HepG2 (cell line): ENCODE measurements at regions of chr11 and their contacts with region 1.

Region 1: DNA sequence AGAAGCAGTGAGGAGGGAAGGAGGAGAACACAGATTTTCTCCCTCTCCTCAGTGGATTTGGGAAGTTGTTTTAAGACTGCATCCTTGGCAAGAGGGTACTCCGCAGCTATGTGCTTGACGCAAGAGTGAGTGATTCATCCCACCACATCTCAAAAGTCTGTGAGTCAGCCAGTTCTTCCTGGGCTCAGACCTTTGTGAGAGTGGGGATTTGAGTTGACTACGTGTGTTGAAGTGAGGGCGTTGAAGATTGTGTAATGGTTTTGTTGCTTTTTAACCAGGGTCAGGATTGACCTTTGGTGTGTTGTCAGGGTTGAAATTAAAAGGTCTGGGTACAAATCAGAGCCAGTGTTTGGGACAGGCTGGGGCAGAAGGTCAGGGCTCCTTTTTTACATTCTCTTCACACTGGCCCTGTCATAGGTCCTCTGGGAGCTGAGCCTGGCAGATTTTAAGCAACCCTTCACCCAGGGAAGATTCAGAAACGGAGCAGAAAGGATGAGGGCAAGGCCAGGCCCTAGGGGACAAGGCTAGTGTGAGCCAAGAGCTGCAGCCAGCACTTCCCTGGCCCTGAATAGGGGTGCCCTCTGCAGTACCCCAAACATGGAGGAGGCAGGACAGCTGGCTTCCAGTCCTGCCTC is 4.2 kb upstream of the C11orf86 start:
- DNase-seq: peak; percentile 95
- ATAC-seq: peak; percentile 84
- H3K4me3 ChIP-seq: peak overlapping the region in 1 of 3 experiments; percentile 56; a peak in 2 of 6 replicates
- H3K27ac ChIP-seq: peak overlapping the region; percentile 64
- H3K4me1 ChIP-seq: peaks cover 94% of the 10 kb centered on the region
- H3K27me3 ChIP-seq: no peaks in the 10 kb centered on the region
- CTCF ChIP-seq: no peak
- EP300 ChIP-seq: peak; percentile 72 to 89; a peak in 3 of 4 replicates
- POLR2A ChIP-seq: peak; percentile 36 to 48; a peak in 1 of 4 replicates
- RAD21 ChIP-seq: no peak

Region 2: GRCh38 chr11:66891851-66892660 is 78.9 kb before region 1 on chr11:
- CTCF ChIA-PET with region 1: no interaction called
- POLR2A ChIA-PET with region 1: no interaction called
- in situ Hi-C with region 1: no loop called
- intact Hi-C with region 1: no loop called
- DNase-seq: peak; percentile 88
- ATAC-seq: peak; percentile 89
- H3K4me3 ChIP-seq: no peak overlapping the region
- H3K27ac ChIP-seq: peak overlapping the region; percentile 22
- H3K4me1 ChIP-seq: peaks cover 37% of the 10 kb centered on the region
- H3K27me3 ChIP-seq: no peaks in the 10 kb centered on the region
- CTCF ChIP-seq: peak; percentile 52
- EP300 ChIP-seq: peak in 1 of 2 experiments; percentile 63; a peak in 1 of 4 replicates
- POLR2A ChIP-seq: no peak
- RAD21 ChIP-seq: no peak

Region 3: DNA sequence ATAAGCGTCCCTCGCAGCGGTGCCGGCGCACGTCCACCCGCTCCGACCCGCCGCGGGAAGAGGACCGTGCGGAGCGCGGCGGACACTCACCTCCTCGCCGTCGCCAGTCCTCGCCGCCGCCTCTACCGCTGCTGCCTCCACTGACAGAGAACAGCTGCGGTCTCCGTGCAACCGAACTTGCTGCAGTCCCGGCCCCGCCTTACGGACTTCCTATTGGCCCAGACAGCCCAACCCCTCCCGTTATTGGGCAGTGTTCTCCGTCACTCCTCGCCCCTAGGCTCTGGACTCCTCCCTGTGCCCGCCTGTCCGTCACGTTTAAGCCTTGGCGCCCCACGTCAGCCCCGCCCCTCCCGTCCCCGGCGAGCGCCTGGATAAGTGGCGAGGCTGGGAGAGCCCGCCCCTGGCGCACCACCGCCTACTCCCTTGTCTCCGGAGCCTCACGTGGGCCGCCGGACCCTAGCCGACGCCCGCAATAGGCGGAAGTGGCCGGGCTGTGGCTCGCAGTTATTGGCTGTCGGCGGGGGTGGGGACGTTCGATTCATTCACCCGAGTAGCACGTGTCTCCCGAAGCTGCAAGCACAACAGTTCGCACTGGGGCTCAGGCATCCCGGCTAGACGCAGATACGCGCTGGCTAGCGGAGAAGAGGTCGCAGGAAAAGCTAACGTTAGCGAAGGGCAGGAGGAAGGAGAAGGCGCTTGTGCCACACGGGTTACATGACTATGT is 12.5 kb before region 1 on chr11 and contains the start of gene PC:
- CTCF ChIA-PET with region 1: no interaction called
- POLR2A ChIA-PET with region 1: interaction called, 30 read pairs
- in situ Hi-C with region 1: no loop called
- intact Hi-C with region 1: no loop called
- DNase-seq: peak; percentile 98
- ATAC-seq: peak; percentile 95
- H3K4me3 ChIP-seq: peak within 1 kb of the TSS; percentile 63 to 84 (median 82)
- H3K27ac ChIP-seq: peak within 1 kb of the TSS; percentile 69
- H3K4me1 ChIP-seq: peaks cover 29% of the 10 kb centered on the region
- H3K27me3 ChIP-seq: no peaks in the 10 kb centered on the region
- CTCF ChIP-seq: peak; percentile 4; the same call in 1 of the 2 replicates
- EP300 ChIP-seq: peak in 1 of 2 experiments; percentile 27; a peak in 1 of 4 replicates
- POLR2A ChIP-seq: peak; percentile 30 to 71; a peak in 3 of 4 replicates
- RAD21 ChIP-seq: no peak
- total RNA-seq, gene PC: 32.6 and 39.0 TPM in 2 replicates

Region 4: DNA sequence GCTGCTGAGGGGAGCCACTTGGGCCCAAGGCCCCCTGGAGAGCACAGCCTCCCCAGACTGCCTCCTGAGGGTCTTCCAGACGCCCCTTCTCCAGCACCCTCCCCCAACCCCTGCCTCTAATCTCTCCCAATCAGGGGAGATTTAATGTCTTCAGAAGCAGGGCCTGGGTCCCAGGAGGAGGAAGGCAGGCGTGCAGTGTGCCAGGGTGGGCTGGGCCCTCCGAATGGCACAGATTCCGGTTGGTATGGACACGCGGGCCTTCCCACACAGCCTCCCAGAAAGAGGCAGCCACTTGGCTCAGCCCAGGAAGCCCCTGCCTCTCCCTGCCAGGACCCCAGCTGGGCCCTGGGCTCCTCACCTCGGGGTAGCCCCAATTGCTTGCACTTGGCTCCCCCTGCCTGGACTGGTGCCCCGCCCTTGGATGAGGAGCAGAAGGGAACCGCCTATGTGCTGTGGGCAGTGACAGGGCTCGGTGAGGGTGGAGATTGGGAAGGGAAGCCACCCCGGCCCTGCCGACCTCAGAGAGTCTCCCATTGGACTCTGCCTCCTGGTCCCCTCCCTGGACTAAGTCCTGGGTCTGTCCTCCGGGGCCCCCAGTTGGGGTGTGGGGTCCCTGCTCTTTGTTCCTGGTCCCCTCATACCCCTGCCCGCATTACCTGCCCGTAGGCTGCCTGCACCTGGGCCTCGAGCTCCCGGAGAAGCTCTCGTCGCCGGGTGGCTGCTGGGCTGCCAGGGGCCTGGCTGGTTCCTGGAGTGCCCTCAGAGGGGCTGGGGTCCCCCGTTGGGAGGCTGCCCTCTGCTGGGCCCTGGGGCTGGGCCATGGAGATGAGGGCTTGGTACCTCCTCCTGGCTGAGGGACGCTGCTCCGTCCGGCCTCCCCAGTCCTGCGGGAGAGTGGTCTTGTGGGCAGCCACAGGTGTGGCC is 552.9 kb after region 1 on chr11:
- CTCF ChIA-PET with region 1: no interaction called
- POLR2A ChIA-PET with region 1: no interaction called
- in situ Hi-C with region 1: no loop called
- intact Hi-C with region 1: loop called (anchors 10 kb)
- DNase-seq: no peak
- ATAC-seq: peak; percentile 24; the same call in 2 of the 3 replicates
- H3K4me3 ChIP-seq: no peak overlapping the region
- H3K27ac ChIP-seq: no peak overlapping the region
- H3K4me1 ChIP-seq: no peaks in the 10 kb centered on the region
- H3K27me3 ChIP-seq: peaks cover 4 to 22% of the 10 kb centered on the region in 2 experiments; a peak in 4 of 5 replicates
- CTCF ChIP-seq: 0 out of 2 replicates have a peak, but pooled peaks have one; percentile 10
- EP300 ChIP-seq: no peak
- POLR2A ChIP-seq: no peak
- RAD21 ChIP-seq: no peak